SK-N-SH (cell line): ENCODE measurements at regions of chr14 and their contacts with region 1.

Region 1: DNA sequence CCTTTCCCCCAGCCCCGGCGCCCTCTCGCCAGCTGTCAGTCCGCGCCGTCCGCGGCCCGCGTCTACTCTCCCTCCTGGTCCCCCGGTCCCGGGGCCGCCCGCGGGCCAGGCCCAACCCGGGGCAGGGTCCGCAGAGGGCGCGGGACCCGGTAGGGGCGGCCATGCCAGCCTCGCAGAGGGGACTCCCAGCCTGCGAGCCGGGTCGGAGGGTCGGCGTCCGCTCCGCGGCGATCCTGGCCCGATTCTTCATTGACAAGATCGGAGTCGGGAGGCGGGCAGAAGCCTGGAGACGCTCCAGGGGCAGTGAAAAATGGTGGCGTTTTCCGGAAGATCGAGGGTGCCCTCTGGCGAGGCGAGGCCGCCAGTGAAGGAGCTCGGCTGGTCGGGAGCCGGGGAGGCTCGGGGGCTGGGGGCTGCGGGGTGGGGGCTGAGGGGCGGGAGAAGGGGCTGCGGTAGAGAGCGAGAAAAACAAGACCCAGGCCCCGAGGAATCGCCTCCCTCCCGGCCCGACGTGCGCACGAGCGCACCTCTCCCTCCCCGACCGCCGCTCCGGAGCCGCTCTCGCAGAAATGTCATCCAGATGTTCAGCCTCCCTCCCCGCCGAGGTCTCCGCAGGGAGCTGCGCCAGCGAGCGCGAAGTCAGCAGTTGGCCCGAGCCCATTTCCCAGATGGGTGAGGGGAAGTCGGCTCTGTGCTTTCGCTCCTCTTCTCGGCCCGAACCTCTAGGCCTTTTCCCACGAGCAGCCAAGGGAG is 647 bp upstream of the TGFB3 start:
- DNase-seq: peak; percentile 90
- H3K4me3 ChIP-seq: peak overlapping the region; percentile 75 to 95
- H3K27ac ChIP-seq: peak overlapping the region; percentile 64 to 86
- H3K4me1 ChIP-seq: peaks cover 18 to 53% of the 10 kb centered on the region in 2 experiments
- H3K27me3 ChIP-seq: no peaks in the 10 kb centered on the region
- CTCF ChIP-seq: peak; percentile 57
- EP300 ChIP-seq: no peak
- RAD21 ChIP-seq: peak; percentile 81

Region 2: DNA sequence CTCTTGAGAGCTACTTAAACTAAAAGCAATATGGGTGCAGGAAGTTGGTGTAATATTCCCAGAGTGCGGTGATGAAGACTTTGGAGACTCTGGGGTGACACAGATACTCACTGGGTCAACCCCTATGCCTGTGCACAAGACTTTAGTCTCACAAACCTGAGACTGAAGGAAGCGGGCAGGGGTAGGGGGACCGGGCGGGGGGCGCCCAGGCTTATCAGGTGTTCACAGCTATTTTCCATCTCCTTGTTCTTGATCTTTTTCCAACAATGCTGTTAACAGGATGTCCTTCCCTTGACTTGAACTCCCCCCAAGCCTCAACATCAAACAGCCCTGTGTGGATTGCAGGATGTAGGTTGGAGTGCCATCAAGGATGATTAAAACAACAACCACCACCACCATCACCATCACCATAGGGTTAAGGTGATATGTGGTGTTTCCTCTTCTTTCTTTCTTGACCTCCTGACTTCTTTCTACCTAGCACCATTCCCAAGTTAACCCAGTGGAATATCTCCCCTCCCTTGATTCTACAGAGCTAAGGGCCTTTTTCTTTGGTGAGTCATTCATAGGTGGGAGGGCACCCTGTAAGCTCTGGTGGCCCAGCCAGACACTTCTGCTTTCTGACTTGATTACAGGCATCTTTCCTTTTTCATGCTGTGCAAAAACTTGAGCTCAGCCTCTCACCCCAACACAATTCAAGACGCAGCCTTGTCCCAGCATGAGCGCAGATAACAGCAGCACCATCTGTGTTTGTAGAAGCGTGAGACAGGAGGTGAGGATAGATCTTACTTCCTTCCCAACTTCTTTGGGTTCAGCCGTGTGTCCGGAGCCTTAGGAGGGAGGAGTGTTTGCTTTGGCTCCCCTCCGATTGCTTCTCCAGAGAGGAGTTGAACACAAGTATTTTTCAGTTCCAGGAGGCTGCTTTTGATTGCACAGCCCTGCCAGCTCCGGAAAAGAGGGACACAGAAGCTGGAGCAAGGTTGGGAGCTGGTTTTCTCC is 377.3 kb before region 1 on chr14:
- CTCF ChIA-PET with region 1: no interaction called
- POLR2A ChIA-PET with region 1: no interaction called
- DNase-seq: no peak
- H3K4me3 ChIP-seq: no peak overlapping the region
- H3K27ac ChIP-seq: no peak overlapping the region
- H3K4me1 ChIP-seq: no peaks in the 10 kb centered on the region; a peak in 1 of 4 replicates
- H3K27me3 ChIP-seq: peaks cover 29% of the 10 kb centered on the region; the same call in 1 of the 2 replicates
- CTCF ChIP-seq: no peak
- EP300 ChIP-seq: no peak
- RAD21 ChIP-seq: no peak

Region 3: GRCh38 chr14:75720842-75721498 is 261.5 kb before region 1 on chr14:
- CTCF ChIA-PET with region 1: interaction called, 10 read pairs
- POLR2A ChIA-PET with region 1: no interaction called
- DNase-seq: no peak
- H3K4me3 ChIP-seq: 0 out of 4 replicates have a peak overlapping the region, but pooled peaks of 1 of the 2 experiments have one; percentile 17
- H3K27ac ChIP-seq: peak overlapping the region; percentile 81; a peak in 3 of 4 replicates
- H3K4me1 ChIP-seq: peaks cover 0 to 14% of the 10 kb centered on the region in 2 experiments; a peak in 2 of 4 replicates
- H3K27me3 ChIP-seq: no peaks in the 10 kb centered on the region
- CTCF ChIP-seq: no peak
- EP300 ChIP-seq: no peak
- RAD21 ChIP-seq: no peak

Region 4: GRCh38 chr14:75811872-75812499 is 170.5 kb before region 1 on chr14:
- CTCF ChIA-PET with region 1: interaction called, 11 read pairs
- POLR2A ChIA-PET with region 1: no interaction called
- DNase-seq: peak; percentile 9
- H3K4me3 ChIP-seq: no peak overlapping the region
- H3K27ac ChIP-seq: no peak overlapping the region
- H3K4me1 ChIP-seq: peaks cover 0 to 4% of the 10 kb centered on the region in 2 experiments; a peak in 1 of 4 replicates
- H3K27me3 ChIP-seq: no peaks in the 10 kb centered on the region
- CTCF ChIP-seq: no peak
- EP300 ChIP-seq: no peak
- RAD21 ChIP-seq: no peak

Region 5: DNA sequence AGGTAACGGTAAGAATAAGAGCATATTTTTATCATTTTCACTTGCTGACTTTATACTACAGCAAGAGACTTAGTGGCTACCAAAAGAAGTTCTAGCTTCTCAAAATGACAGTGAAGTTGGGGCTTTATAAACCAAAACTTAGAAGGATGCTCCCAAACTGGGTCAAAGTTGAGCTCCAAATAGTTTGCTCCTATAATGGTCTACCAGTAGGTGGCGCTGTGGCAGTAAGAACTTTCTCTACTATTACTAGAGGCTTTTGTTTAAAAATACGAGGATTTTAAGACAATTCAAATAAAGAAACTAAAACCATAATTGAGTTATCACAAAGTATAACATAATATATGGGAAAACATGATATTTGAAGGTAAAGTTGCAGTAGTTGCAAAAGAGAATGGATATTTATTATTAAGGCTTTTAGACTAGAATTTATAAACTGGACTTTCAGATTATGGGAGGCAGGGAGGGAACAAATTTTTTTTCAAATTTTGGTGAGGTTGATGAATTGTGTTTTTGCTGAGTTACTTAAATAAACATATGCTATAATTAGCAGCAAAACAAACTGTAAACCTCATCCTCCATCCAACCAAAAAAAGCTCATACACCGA is 75.7 kb before region 1 on chr14:
- CTCF ChIA-PET with region 1: interaction called, 550 read pairs
- POLR2A ChIA-PET with region 1: interaction called, 6 read pairs
- DNase-seq: peak; percentile 39
- H3K4me3 ChIP-seq: no peak overlapping the region
- H3K27ac ChIP-seq: no peak overlapping the region
- H3K4me1 ChIP-seq: peaks cover 9 to 13% of the 10 kb centered on the region in 2 experiments; a peak in 3 of 4 replicates
- H3K27me3 ChIP-seq: no peaks in the 10 kb centered on the region
- CTCF ChIP-seq: peak; percentile 98
- EP300 ChIP-seq: no peak
- RAD21 ChIP-seq: peak; percentile 87

Region 6: DNA sequence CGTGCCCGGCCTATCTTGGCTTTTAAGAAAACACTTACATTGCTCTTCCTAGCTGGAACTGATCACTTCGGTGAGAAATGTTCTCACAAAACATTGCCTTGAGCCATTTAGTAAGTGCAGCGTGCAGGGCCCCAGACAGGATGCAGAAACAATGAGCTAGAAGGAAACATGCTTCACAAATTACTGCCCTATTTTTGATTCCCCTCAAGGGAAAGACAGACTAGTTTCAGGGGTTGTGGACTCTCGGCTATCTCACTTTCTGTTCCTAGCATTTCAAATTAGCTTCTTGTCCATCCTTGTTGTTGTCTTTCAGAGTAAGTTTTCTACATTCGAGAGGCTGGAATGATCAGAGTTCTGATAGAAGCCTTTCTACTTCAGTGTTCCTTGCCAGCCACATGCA is 22.2 kb before region 1 on chr14:
- CTCF ChIA-PET with region 1: interaction called, 13 read pairs
- POLR2A ChIA-PET with region 1: no interaction called
- DNase-seq: peak; percentile 21
- H3K4me3 ChIP-seq: no peak overlapping the region
- H3K27ac ChIP-seq: peak overlapping the region in 1 of 2 experiments; percentile 51; a peak in 2 of 4 replicates
- H3K4me1 ChIP-seq: peaks cover 0 to 12% of the 10 kb centered on the region in 2 experiments; a peak in 2 of 4 replicates
- H3K27me3 ChIP-seq: no peaks in the 10 kb centered on the region
- CTCF ChIP-seq: no peak
- EP300 ChIP-seq: no peak
- RAD21 ChIP-seq: no peak

Region 7: DNA sequence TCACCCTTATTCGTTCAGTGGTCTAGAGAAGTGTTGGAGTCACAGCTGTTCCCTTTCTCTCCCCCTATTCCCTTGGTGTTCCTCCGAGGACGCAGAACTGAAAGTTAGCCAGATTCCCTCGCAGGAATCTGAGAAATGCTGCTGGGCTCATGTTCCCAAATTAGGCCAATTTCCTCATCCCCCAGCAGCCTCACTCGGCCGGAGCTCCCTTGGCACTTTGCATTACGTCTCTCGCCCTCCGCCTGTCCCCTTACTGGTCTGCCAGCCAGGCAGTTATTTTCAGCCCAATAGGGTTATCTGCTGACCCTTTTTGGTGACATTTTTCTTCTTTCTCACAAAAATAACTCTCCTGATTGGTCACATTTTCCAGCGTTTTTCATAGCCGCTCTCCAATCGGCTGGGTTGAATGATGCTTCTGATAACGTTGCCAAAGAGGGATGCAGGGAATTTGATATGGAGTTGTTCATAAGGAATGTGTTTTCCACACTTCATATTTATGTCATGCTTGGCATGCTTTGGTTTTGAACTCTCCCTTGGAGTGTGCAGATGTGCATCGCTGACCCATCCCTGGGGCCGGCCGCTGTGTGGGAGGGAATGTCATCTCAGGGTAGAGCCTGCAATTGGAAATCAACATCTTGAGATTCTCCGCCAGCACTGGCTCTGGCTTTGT is 13.1 kb after region 1 on chr14:
- CTCF ChIA-PET with region 1: interaction called, 16 read pairs
- POLR2A ChIA-PET with region 1: no interaction called
- DNase-seq: no peak
- H3K4me3 ChIP-seq: no peak overlapping the region
- H3K27ac ChIP-seq: no peak overlapping the region
- H3K4me1 ChIP-seq: peaks cover 0 to under 1% of the 10 kb centered on the region in 2 experiments; a peak in 1 of 4 replicates
- H3K27me3 ChIP-seq: no peaks in the 10 kb centered on the region
- CTCF ChIP-seq: no peak
- EP300 ChIP-seq: no peak
- RAD21 ChIP-seq: no peak

Region 8: GRCh38 chr14:76386915-76387782 is 404.7 kb after region 1 on chr14:
- CTCF ChIA-PET with region 1: interaction called, 10 read pairs
- POLR2A ChIA-PET with region 1: no interaction called
- DNase-seq: peak; percentile 90
- H3K4me3 ChIP-seq: peak overlapping the region in 1 of 2 experiments; percentile 50; a peak in 1 of 4 replicates
- H3K27ac ChIP-seq: no peak overlapping the region
- H3K4me1 ChIP-seq: no peaks in the 10 kb centered on the region; a peak in 1 of 4 replicates
- H3K27me3 ChIP-seq: peaks cover 46% of the 10 kb centered on the region
- CTCF ChIP-seq: peak; percentile 97
- EP300 ChIP-seq: no peak
- RAD21 ChIP-seq: peak; percentile 95